ENCODE measurements at regions of chr9 and their contacts with region 1.

Region 1: DNA sequence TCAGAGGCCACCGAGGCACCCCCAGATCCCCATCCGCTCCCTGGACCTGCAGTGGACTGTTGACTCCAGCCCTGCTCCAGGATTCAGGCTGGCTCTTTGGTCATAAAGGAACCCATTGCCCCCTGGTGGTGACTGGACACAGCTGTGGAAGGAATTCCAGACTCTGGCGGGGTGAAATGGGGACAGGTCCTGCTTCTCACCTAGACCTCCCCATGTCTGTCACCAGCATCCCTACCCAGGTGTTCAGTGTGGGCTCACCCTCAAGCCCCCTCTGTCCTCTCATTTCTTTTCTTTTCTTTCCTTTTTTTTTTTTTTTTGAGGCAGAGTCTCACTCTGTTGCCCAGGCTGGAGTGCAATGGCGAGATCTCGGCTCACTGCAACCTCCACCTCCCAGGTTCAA is 25.5 kb upstream of the STXBP1 start:
- DNase-seq: peak; percentile 78
- H3K4me3 Mint-ChIP-seq: no peak overlapping the region
- H3K27ac Mint-ChIP-seq: no peak overlapping the region
- H3K4me1 Mint-ChIP-seq: peaks cover 5% of the 10 kb centered on the region
- H3K27me3 Mint-ChIP-seq: peaks cover 11% of the 10 kb centered on the region

Region 2: DNA sequence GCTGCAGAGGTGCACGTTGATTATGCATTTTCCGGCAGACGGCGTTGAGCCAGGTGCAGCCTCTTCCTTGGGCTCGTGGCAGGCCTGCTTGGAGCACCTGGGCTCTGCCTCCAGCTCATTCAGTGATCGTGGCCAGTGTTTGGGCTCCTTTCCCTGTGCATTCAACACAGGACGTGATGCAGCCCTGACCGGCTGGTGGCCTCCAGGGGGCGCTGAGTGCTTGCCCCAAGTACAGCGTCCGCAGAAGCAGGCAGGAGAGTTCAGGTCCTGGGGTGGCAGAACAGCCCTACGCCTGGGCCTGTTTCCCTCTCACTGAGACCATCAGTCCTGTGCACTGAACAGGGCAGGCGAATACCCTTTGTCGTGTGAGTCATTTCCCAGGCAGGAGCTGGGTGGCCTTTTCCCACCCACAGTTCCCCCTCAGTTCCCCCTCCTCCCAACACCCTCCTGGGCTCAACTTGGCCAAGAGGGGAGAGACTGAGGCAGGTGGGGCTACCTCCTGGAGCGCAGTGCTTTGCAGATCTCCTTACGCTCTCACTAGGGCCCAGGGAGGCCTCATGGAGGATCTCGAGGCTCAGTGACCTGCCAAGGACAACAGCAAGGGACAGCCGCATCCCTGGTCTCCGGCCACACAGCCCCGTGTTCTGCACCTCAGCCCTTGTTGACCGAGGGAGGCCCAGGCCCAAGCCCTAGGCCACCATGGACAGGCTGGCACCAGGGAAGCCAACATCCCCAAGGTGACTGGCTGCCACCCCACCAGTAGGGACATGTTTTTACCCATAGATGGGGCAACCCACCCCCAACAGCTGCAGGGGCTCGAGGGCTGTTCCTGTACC is 82.4 kb before region 1 on chr9:
- CTCF ChIA-PET with region 1: interaction called, 34 read pairs
- intact Hi-C with region 1: loop called (anchors 1 kb)
- DNase-seq: peak; percentile 88
- H3K4me3 Mint-ChIP-seq: no peak overlapping the region
- H3K27ac Mint-ChIP-seq: no peak overlapping the region
- H3K4me1 Mint-ChIP-seq: no peaks in the 10 kb centered on the region
- H3K27me3 Mint-ChIP-seq: no peaks in the 10 kb centered on the region

Region 3: DNA sequence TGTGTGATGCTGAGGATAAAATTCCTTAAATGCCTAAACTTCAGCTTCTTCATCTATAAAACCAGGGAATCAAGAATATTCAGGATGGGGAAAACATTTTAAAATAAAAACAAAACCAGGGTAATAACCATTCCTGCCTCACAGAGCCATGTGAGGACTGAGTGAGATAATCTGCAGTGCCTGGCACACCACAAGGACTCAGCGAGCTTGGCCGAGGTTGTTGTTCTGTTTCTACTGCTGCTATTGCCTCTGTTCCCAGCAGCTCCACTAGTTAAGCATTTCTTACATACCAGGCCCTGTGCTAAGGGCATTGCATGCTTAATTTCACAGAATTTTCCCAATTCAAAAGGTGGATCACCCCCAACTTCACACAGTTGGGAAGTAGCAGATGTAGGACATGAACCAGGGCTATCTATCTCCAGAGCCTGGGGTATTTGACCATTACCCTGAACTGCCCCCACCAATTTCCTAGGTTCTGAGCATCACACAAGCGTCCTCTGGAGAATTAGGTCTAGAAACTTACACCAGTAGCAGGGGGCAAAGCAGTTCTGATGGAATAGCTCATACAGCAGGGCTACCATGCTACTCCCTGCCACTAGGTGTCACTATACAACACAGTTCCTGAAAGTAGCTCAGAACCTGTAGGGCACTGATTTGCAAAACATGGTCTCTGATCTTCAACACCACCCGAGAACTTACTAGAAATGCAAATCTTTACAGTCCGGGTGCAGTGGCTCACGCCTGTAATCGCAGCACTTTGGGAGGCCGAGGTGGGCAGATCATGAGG is 60.9 kb before region 1 on chr9:
- CTCF ChIA-PET with region 1: interaction called, 15 read pairs
- intact Hi-C with region 1: loop called (anchors 2 kb)
- DNase-seq: peak; percentile 24
- H3K4me3 Mint-ChIP-seq: no peak overlapping the region
- H3K27ac Mint-ChIP-seq: no peak overlapping the region
- H3K4me1 Mint-ChIP-seq: no peaks in the 10 kb centered on the region
- H3K27me3 Mint-ChIP-seq: no peaks in the 10 kb centered on the region

Measured in activated naive CD4-positive, alpha-beta T cell treated with anti-CD3 and anti-CD28 coated beads for 36 hours (primary cell).